Endothelial cell of umbilical vein (primary cell): ENCODE measurements at regions of chr5 and their contacts with region 1.

Region 1: DNA sequence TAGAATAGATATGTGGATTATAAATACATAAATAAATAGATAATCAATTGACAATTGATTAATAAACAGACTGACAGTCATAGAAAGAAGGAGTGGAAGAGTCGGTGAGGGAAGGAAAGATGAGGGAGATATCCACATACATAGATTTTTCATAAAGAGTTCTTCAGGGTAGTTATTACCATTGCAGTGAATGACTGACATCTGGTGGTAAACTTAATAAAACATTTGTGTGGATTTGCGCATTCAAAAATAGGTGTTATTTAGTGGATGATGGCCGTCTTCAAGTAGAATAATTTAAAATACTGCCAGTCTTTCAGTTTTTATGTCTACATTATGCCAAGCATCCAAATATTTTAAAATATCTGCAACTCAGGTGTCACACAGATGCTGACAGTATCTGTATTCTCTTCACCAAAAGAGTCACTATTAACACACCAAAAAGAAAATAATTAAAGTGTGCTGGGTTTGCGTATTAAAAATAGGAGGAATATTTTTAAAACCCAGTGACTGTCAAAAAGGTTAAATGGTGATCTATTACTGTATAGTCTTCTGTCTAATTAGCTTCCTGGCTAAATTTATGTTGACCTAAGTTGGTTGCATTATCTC is 78.8 kb downstream of the GIN1 start:
- DNase-seq: peak; percentile 71
- H3K4me3 ChIP-seq: no peak overlapping the region
- H3K27ac ChIP-seq: no peak overlapping the region
- H3K4me1 ChIP-seq: no peaks in the 10 kb centered on the region
- H3K27me3 ChIP-seq: no peaks in the 10 kb centered on the region
- CTCF ChIP-seq: peak; percentile 8 to 30
- POLR2A ChIP-seq: no peak

Region 2: GRCh38 chr5:103139264-103139865 is 98.2 kb after region 1 on chr5:
- CTCF ChIA-PET with region 1: interaction called, 4 read pairs
- POLR2A ChIA-PET with region 1: no interaction called
- dilution Hi-C with region 1: no loop called
- intact Hi-C with region 1: loop called (anchors 2 kb)
- DNase-seq: peak; percentile 69
- H3K4me3 ChIP-seq: no peak overlapping the region
- H3K27ac ChIP-seq: no peak overlapping the region
- H3K4me1 ChIP-seq: no peaks in the 10 kb centered on the region
- H3K27me3 ChIP-seq: no peaks in the 10 kb centered on the region
- CTCF ChIP-seq: peak; percentile 82 to 89
- POLR2A ChIP-seq: no peak